IMR-90 (cell line): ENCODE measurements at regions of chrX and their contacts with region 1.

Region 1: DNA sequence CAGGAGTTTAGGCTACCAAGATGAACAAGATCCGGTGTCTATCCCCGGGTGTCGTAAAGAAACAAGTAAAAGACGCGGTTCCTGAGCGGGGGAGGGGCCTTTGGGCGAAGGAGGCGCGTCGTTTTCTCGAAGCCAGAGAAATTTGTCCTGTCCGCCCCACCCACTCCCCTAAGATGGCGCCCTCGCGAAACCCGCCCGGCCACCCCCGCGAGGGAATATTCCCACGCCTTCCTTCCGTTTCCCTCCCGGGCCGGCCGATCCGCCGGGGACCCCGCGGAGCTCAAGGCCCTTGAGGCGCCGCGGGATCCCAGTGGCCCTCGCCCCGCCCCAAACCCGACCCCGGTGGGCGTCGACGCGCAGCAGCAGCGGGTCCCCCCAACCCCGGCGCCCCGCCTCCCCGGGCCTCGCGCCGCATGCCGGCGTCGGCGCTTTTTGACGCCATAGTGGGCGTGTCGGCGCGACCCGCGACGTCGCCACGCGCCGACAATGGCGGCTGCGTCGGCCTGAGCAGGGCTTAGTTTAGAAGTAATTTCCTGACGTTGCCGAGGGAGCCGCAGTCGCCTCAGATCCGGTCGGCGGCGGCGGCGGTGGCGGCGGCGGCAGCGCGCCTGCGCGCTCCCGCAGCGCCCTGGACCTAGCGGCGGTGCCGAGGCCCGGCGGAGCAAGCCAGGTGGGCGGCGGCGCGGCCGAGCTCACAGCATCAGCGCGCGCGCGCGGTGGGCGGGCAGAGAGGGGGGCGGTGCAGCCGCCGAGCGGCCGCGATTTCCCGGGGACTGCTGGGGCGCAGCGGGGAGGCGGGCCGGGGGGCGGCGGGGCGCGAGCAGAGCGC is at the start of gene HTATSF1:
- DNase-seq: peak; percentile 79
- ATAC-seq: peak; percentile 89
- H3K4me3 ChIP-seq: peak within 1 kb of the TSS; percentile 89
- H3K27ac ChIP-seq: peak within 1 kb of the TSS; percentile 94
- H3K4me1 ChIP-seq: no peaks in the 10 kb centered on the region
- H3K27me3 ChIP-seq: peaks cover 2% of the 10 kb centered on the region
- CTCF ChIP-seq: no peak
- POLR2A ChIP-seq: 0 out of 2 replicates have a peak, but pooled peaks have one; percentile 57
- RAD21 ChIP-seq: no peak
- total RNA-seq, gene HTATSF1: 19.0 and 27.8 TPM in 2 replicates

Region 2: DNA sequence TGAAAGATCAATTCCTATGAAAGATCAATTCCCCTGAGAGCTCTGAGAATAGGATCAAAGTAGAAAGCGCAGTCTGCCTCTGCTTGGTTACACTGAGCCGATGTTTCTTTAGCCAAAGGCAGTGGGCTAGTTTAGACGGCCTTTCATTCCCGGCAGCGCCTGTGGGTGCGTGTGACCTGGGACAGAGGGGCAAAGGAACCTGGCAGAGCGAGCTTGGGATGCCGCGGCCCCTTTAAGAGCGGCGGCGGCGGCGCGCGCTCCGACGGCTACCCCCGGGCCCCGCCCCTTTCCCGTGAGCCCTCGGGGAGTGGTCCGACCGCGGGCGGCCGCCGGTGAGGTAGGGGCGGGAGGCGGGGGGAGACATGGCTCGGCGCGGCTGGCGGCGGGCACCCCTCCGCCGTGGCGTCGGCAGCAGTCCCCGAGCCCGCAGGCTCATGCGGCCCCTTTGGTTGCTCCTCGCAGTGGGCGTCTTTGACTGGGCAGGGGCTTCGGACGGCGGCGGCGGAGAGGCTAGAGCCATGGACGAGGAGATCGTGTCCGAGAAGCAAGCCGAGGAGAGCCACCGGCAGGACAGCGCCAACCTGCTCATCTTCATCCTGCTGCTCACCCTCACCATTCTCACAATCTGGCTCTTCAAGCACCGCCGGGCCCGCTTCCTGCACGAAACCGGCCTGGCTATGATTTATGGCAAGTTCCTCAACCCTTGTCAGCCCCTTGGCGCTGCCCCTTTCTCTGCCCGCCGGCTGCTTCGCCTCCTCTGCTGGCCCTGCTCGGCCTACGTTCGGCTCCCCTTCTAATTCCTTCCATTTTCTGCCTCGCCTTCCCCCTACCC is 511.6 kb before region 1 on chrX and contains the start of gene SLC9A6:
- CTCF ChIA-PET with region 1: no interaction called
- POLR2A ChIA-PET with region 1: no interaction called
- dilution Hi-C with region 1: no loop called
- in situ Hi-C with region 1: loop called (anchors 25 kb)
- intact Hi-C with region 1: no loop called
- DNase-seq: peak; percentile 17
- ATAC-seq: peak; percentile 91
- H3K4me3 ChIP-seq: peak within 1 kb of the TSS; percentile 87
- H3K27ac ChIP-seq: peak within 1 kb of the TSS; percentile 81
- H3K4me1 ChIP-seq: peaks cover 2% of the 10 kb centered on the region; the same call in 1 of the 2 replicates
- H3K27me3 ChIP-seq: no peaks in the 10 kb centered on the region
- CTCF ChIP-seq: no peak
- POLR2A ChIP-seq: no peak
- RAD21 ChIP-seq: no peak
- total RNA-seq, gene SLC9A6: 19.0 and 25.0 TPM in 2 replicates

Region 3: DNA sequence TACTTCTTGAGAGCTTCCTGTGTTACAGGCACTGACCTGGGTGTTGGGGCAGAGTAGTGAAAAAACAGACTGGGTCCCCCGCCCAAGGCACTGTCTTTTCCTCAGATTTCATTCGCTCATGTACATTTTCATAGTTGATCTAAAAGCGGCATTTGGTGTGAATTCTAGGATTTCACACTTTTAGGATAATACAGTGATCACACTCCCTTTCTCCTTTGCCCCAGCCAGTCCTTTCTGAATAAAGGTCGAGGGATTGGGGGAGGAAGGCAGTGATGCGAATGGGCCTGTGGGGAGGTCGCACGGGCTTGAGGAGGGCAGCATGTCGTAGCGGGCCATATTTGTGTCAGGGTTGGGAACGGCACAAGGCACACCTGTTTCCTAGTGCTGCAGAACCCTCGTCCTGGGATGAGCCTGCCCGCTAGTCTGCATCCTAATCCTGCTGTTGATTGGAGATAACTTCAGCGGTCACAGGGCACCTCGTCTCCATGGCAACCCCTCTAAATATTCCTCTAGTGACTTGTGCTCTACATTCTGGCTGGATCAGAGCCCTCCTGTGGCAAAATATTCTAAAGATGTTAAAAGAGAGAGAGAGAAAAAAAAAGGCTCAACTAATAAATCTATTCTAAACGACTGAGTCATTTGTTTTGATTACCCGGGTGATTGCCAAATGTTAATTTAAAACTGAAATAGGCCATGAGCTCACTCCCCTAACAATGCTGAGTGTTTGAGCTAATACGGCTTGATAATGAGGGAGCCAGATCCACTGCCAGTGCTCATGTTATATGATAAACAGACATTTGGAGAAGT is 327.9 kb before region 1 on chrX:
- CTCF ChIA-PET with region 1: no interaction called
- POLR2A ChIA-PET with region 1: no interaction called
- dilution Hi-C with region 1: no loop called
- in situ Hi-C with region 1: no loop called
- intact Hi-C with region 1: loop called (anchors 5 kb)
- DNase-seq: peak; percentile 97
- ATAC-seq: peak; percentile 72
- H3K4me3 ChIP-seq: no peak overlapping the region
- H3K27ac ChIP-seq: peak overlapping the region; percentile 93
- H3K4me1 ChIP-seq: peaks cover 16% of the 10 kb centered on the region
- H3K27me3 ChIP-seq: no peaks in the 10 kb centered on the region
- CTCF ChIP-seq: peak; percentile 13; the same call in 1 of the 2 replicates
- POLR2A ChIP-seq: no peak
- RAD21 ChIP-seq: no peak

Region 4: GRCh38 chrX:136251041-136251991 is 245.7 kb before region 1 on chrX and contains the start of gene MAP7D3:
- CTCF ChIA-PET with region 1: no interaction called
- POLR2A ChIA-PET with region 1: no interaction called
- dilution Hi-C with region 1: no loop called
- in situ Hi-C with region 1: no loop called
- intact Hi-C with region 1: loop called (anchors 5 kb)
- DNase-seq: peak; percentile 33
- ATAC-seq: peak; percentile 92
- H3K4me3 ChIP-seq: peak within 1 kb of the TSS; percentile 91
- H3K27ac ChIP-seq: peak within 1 kb of the TSS; percentile 61
- H3K4me1 ChIP-seq: no peaks in the 10 kb centered on the region; the same call in 1 of the 2 replicates
- H3K27me3 ChIP-seq: no peaks in the 10 kb centered on the region
- CTCF ChIP-seq: no peak
- POLR2A ChIP-seq: peak; percentile 40; the same call in 1 of the 2 replicates
- RAD21 ChIP-seq: no peak
- total RNA-seq, gene MAP7D3: 21.7 and 23.8 TPM in 2 replicates

Region 5: DNA sequence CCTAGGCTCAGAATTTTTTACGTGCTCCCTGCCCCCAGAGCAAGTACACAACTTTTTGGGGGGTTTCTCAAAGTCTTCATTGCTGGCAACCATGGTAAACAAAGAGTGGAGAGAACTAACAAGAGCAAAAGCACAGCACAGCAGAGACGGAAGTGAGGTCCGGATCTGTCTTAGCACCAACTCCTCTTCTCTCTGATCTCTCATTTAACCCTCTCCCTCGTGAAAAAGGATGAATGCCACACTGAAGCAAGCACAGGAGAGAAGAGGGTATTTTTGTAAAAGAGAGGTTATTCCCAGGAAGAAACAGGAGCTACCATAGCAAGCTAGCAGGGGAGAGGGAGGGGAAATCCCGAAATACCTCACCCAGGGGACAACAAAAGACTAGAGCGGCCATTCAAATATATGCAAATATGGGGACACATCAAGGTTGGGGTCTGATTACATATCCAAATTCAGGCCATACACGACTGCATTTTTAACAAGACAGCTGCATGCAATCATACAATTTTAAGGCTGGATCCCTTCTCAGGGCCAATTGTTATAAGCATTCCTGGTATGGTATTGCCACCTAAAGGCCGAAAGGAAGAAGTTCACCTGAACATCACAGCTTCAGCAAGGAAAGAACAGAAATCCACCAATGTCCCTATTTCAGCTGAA is 197.6 kb after region 1 on chrX:
- CTCF ChIA-PET with region 1: no interaction called
- POLR2A ChIA-PET with region 1: no interaction called
- dilution Hi-C with region 1: no loop called
- in situ Hi-C with region 1: no loop called
- intact Hi-C with region 1: loop called (anchors 10 kb)
- DNase-seq: peak; percentile 58
- ATAC-seq: peak; percentile 82
- H3K4me3 ChIP-seq: no peak overlapping the region
- H3K27ac ChIP-seq: no peak overlapping the region
- H3K4me1 ChIP-seq: no peaks in the 10 kb centered on the region
- H3K27me3 ChIP-seq: no peaks in the 10 kb centered on the region; the same call in 1 of the 2 replicates
- CTCF ChIP-seq: peak; percentile 67
- POLR2A ChIP-seq: no peak
- RAD21 ChIP-seq: peak; percentile 80

Region 6: GRCh38 chrX:136933611-136934145 is 436.7 kb after region 1 on chrX:
- CTCF ChIA-PET with region 1: no interaction called
- POLR2A ChIA-PET with region 1: no interaction called
- dilution Hi-C with region 1: no loop called
- in situ Hi-C with region 1: no loop called
- intact Hi-C with region 1: loop called (anchors 10 kb)
- DNase-seq: no peak
- ATAC-seq: no peak
- H3K4me3 ChIP-seq: no peak overlapping the region
- H3K27ac ChIP-seq: no peak overlapping the region
- H3K4me1 ChIP-seq: no peaks in the 10 kb centered on the region; the same call in 1 of the 2 replicates
- H3K27me3 ChIP-seq: no peaks in the 10 kb centered on the region
- CTCF ChIP-seq: no peak
- POLR2A ChIP-seq: no peak
- RAD21 ChIP-seq: no peak